ENCODE measurements at regions of chr14 and their contacts with region 1.

Region 1: DNA sequence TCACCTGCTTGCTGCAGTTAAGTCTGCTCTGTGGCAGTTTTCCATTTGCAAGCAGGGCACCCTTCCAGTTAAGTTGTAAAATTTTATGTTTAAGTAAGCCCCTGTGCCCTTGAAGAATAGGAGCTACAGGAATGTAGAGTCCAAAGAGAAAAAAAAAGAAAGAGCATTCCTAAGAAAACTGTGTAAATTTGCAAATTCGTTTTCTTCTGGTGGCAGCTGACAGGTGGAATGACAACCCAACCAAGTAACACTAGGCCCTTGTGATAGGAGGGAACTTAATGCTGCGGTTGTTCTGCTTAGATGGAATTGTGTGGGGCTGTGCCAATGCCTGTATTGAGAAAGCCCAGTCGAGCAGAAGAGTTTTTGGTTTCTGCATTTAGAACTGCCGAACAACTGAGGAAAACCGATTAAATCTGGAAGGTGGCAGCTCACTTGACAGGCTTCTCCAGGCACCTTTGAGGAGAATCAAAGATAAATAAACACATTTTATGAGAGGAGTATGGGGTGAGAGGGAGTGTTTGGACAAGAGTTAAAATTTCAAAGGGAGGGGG is 280.0 kb downstream of the RAD51B start:
- DNase-seq: no peak
- H3K4me3 ChIP-seq: no peak overlapping the region
- H3K27ac ChIP-seq: no peak overlapping the region
- H3K4me1 ChIP-seq: no peaks in the 10 kb centered on the region
- H3K27me3 ChIP-seq: no peaks in the 10 kb centered on the region
- CTCF ChIP-seq: no peak
- POLR2A ChIP-seq: no peak

Region 2: DNA sequence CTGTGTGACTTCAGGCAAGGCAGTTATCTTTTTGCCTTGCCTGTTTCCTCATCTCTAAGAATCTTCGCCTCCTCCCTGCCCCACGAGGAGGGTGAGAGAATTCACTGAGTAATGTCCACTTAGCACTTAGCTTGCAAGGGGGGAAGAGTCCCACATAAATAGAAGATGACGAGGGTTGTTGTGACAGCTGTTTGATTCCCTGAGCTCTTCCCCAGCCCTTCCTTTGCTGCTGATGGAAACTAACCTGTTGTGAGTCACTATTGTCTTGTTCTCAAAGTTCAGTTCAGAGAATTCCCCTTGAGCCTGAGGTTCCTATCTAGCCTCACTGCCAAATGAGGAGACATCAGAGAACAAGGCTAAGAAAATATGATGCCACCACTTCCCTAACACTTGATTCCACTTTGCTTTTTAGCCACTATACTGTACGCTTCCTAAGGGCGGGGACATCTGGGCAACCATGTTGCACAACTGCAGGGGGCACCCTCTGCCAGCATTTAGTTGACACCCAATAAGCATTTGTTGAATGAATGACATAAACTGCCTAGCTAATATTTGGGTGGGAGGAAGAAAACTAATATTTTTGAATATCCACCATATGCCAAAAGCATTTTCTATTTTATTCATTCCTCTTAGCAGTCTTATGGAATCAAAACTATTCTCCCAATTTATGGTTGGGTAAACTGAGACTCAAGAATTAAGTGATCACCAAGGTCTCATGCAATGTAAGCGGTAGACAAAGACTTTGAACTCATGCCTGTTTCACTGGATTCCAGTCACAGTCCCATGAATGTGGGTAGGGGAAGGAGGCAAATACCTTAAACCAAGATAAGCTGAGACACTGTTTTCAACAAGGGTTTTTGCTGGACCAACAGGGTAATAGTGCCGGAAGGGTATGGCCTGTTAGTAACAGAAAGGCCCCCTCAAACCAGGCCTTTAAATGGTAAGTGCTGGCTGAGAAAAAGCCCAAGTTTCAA is 615.7 kb after region 1 on chr14:
- intact Hi-C with region 1: no loop called
- DNase-seq: no peak
- H3K4me3 ChIP-seq: no peak overlapping the region
- H3K27ac ChIP-seq: no peak overlapping the region
- H3K4me1 ChIP-seq: peaks cover 0 to 4% of the 10 kb centered on the region in 2 donors
- H3K27me3 ChIP-seq: no peaks in the 10 kb centered on the region
- CTCF ChIP-seq: no peak
- POLR2A ChIP-seq: no peak

Region 3: DNA sequence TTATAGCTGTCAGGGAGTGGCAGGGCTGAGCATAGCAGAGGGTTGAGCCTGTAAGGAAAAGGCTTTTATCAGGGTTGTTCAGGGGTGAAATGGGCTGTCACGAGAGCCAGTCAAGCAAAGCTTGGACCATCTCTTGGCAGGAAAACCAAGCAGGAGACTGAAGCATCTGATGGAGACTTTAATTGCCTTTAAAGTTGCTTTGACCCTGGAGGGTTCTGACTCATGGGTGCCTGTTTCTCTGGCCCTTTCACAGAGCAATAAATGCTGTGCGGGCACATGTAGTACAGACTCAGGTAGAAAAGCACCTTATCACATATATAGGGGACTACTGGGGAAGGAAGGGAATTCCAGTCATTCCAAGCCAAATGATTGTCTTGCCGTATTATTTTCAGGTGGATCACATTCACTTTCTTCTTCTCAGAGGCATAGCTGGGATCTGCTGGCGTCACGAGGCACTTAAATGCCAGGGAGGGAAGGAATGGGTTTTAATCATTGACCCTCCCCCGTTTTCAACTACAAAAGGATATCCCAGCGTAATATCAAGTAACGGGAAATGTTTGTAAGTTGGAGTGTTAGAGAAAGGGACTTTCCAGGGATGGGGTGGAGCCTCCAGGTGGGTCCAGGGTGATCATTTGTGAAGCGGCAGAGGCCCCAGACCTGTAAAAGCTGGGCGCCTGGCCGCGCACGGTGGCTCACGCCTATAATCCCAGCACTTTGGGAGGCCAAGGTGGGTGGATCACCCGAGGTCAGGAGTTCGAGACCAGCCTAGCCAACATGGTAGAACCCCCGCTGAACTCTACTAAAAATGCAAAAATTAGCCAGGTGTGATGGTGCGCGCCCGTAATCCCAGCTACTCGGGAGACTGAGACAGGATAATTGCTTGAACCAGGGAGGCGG is 1419.9 kb after region 1 on chr14:
- intact Hi-C with region 1: loop called (anchors 10 kb)
- DNase-seq: no peak
- H3K4me3 ChIP-seq: no peak overlapping the region
- H3K27ac ChIP-seq: no peak overlapping the region
- H3K4me1 ChIP-seq: no peaks in the 10 kb centered on the region
- H3K27me3 ChIP-seq: no peaks in the 10 kb centered on the region
- CTCF ChIP-seq: no peak
- POLR2A ChIP-seq: no peak